ENCODE measurements at regions of chr6 and their contacts with region 1.

Region 1: DNA sequence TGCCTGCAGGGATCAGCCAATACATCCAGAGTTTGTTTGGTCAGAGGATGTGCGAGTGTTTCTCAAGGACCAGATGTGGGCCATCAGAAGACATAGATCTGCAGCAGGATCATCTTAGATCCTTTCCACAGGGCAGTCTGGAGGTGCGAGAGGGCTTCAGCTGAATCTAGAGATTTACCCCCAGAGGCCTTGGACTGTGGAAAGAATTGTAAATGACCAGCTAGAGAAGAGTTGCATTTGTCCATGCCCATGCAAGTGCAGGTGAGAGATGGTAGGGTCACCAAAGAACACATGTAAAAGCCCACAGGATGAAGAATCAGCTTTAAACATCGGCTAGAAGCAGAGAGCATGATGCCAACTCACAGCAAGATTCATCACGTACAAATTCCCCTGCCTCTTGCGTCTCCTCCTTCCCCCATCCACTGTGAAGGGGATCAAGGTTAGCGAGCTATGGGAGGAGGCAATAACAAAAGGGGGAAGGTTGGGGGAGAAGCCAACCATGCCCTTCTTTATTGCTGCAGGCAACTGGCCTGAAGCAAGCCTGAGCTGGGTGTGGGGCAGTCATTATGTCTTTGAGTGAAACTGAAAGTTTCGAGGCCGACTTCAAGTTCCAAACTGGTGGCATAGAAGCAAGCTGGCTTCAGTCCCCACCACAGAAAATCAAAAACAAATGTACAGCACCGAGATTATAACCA is 83.5 kb downstream of the SCML4 start:
- DNase-seq: peak in 3 of 5 donors; percentile 33 to 42 (median 39)
- H3K4me3 ChIP-seq: peak overlapping the region; percentile 21 to 60
- H3K4me3 Mint-ChIP-seq: peak overlapping the region; percentile 75 to 91 (median 80)
- H3K27ac ChIP-seq: peak overlapping the region; percentile 63
- H3K27ac Mint-ChIP-seq: peak overlapping the region; percentile 89 to 96 (median 92)
- H3K4me1 ChIP-seq: peaks cover 74% of the 10 kb centered on the region
- H3K4me1 Mint-ChIP-seq: peaks cover 75 to 86% (median 79%) of the 10 kb centered on the region in 4 donors
- H3K27me3 ChIP-seq: no peaks in the 10 kb centered on the region
- H3K27me3 Mint-ChIP-seq: no peaks in the 10 kb centered on the region

Region 2: DNA sequence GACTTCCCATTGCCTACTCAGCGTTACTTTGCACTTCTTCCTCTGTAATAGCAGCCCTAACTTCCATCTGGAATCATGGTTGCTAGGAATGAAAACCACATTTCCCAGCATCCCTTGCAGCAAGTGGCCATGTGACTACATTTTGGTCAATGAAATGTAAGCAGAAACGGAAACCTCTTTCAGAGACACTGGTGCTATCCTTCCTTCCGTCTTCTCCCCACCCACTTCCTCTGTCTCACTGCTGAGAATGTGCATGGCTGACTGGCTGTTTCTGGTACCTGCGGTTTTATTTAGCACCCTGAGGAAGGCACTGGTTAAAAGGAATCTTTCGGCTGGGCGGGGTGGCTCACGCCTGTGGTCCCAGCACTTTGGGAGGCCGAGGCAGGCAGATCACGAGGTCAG is 24.0 kb before region 1 on chr6:
- CTCF ChIA-PET with region 1: no interaction called
- POLR2A ChIA-PET with region 1: interaction called, 10 read pairs
- intact Hi-C with region 1: no loop called
- DNase-seq: peak; percentile 83 to 92 (median 87)
- H3K4me3 ChIP-seq: no peak overlapping the region
- H3K4me3 Mint-ChIP-seq: peak overlapping the region in 7 of 8 donors; percentile 40 to 78 (median 74)
- H3K27ac ChIP-seq: no peak overlapping the region
- H3K27ac Mint-ChIP-seq: peak overlapping the region; percentile 89 to 98 (median 94)
- H3K4me1 ChIP-seq: peaks cover 66% of the 10 kb centered on the region
- H3K4me1 Mint-ChIP-seq: peaks cover 57 to 90% (median 75%) of the 10 kb centered on the region in 4 donors
- H3K27me3 ChIP-seq: no peaks in the 10 kb centered on the region
- H3K27me3 Mint-ChIP-seq: no peaks in the 10 kb centered on the region

Region 3: DNA sequence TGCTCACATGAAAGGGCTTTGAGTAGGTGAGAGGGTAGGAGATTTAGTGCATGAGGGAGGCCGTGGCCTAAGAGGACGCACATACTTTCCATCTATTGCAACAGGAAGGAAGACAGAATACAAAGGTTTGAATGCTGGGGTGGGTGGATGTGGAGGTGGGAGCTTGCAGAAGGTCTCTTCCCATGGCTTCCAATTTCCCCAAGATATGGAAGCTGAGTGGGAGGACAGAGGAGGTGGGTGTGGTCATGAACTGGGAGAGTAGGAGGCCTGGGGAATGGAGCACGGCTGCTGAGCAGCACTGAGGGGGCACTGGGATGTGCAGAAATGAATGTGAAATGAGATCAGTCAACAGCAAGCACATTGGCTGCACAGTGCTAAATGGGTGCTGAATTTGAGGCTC is 13.1 kb after region 1 on chr6:
- CTCF ChIA-PET with region 1: interaction called, 15 read pairs
- POLR2A ChIA-PET with region 1: interaction called, 20 read pairs
- intact Hi-C with region 1: loop called (anchors 2 kb)
- DNase-seq: no peak
- H3K4me3 ChIP-seq: no peak overlapping the region
- H3K4me3 Mint-ChIP-seq: peak overlapping the region in 7 of 8 donors; percentile 57 to 77 (median 64)
- H3K27ac ChIP-seq: no peak overlapping the region
- H3K27ac Mint-ChIP-seq: peak overlapping the region in 6 of 7 donors; percentile 47 to 90 (median 78)
- H3K4me1 ChIP-seq: peaks cover 64% of the 10 kb centered on the region
- H3K4me1 Mint-ChIP-seq: peaks cover 56 to 91% (median 77%) of the 10 kb centered on the region in 4 donors
- H3K27me3 ChIP-seq: no peaks in the 10 kb centered on the region
- H3K27me3 Mint-ChIP-seq: no peaks in the 10 kb centered on the region